Ascending aorta (tissue), 2 donors: ENCODE measurements at regions of chr1 and their contacts with region 1.

Region 1: DNA sequence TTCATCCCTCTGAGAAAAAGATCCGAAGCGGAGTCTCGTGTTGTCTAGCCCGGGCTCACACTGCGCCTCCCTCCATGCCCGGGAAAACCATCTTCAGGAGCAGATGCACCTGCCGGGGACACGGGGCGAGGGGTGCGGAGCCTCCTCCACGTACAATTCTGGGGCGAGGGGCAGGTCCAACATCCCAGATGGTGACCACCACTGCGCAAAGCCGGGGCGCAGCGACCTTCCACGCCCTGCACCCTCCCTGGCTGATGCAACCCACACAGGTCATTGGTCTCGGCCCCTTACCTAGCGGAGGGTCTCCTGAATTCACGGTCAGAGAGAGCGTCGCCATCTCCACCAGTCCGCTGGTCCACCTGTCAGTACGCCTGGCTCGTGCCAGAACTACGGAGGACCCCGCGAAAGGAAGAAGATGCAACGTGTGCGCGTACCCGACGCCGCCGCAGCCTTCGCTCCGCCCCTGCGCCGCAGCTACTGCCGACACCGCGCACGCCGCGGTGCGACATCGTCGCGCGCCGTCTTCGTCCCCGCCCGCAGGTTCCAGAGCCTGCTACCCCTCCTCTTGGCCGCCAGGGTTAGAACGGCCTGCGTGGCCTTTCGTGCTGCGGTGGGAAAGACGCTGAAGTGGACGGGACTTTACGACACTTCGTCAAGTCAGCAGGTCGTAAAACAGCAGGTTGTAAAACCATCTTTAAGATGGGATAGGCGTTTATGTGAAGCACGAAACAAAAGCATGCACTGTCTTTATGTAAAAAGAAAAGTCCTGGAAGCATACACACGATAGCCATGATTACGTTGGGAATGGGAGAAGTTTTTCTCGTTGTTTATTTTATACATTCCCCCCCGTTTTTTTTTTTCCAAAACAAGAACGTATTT is at the start of gene EPRS1:
- DNase-seq: peak; percentile 71 to 96
- H3K4me3 ChIP-seq: peak within 1 kb of the TSS; percentile 67 to 99
- H3K27ac ChIP-seq: peak within 1 kb of the TSS; percentile 84 to 89
- H3K4me1 ChIP-seq: peaks cover 0 to 10% of the 10 kb centered on the region in 2 donors
- H3K27me3 ChIP-seq: no peaks in the 10 kb centered on the region
- CTCF ChIP-seq: peak; percentile 70 to 85 (median 76)
- total RNA-seq, gene EPRS1: 16.0 TPM

Region 2: DNA sequence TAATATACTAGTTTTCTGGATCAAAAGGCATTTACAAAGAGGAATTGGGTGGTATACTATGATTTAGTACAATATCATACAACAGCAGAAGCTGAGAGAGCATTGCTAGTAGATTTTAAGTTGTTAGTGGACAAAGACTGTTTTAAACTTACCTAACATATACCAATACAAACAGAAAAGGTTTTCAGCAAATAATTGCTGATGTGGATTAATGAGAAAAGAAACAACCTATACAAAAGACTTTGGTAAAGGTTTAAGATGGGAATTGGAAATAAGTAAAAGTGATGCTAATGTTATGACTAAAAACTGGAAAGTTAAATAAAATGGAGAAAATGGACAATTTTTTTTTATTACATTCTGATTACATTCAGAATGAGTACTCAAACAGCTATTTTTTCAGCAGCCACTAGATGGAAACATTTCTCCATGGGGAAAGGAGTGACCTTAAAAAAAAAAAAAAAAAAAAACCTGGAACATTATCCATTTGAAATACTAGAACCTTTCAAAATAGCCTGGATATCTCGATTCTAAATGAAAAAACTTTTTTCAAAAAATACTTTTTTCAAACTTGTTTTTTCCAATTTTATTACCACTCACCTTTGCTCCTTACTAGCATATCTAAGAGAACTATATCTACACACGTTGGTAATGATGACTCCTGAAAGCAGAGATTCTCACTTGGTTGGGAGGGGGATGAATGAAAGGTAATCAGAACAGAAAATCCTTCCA is 55.3 kb before region 1 on chr1:
- intact Hi-C with region 1: loop called (anchors 1 kb)
- DNase-seq: no peak
- H3K4me3 ChIP-seq: no peak overlapping the region
- H3K27ac ChIP-seq: no peak overlapping the region
- H3K4me1 ChIP-seq: peaks cover 3 to 4% of the 10 kb centered on the region in 2 donors
- H3K27me3 ChIP-seq: no peaks in the 10 kb centered on the region
- CTCF ChIP-seq: peak in 2 of 3 experiments; percentile 51 to 72

Region 3: GRCh38 chr1:220013497-220013896 is 32.8 kb before region 1 on chr1:
- intact Hi-C with region 1: loop called (anchors 2 kb)
- DNase-seq: no peak
- H3K4me3 ChIP-seq: no peak overlapping the region
- H3K27ac ChIP-seq: peak overlapping the region; percentile 23 to 78
- H3K4me1 ChIP-seq: peaks cover 3 to 10% of the 10 kb centered on the region in 2 donors
- H3K27me3 ChIP-seq: no peaks in the 10 kb centered on the region
- CTCF ChIP-seq: no peak

Region 4: GRCh38 chr1:220089650-220090556 is 43.6 kb after region 1 on chr1 and contains the start of gene BPNT1:
- intact Hi-C with region 1: loop called (anchors 5 kb)
- DNase-seq: peak; percentile 74 to 97
- H3K4me3 ChIP-seq: peak within 1 kb of the TSS; percentile 56 to 71
- H3K27ac ChIP-seq: peak within 1 kb of the TSS in 1 of 2 donors; percentile 59
- H3K4me1 ChIP-seq: peaks cover 0 to 2% of the 10 kb centered on the region in 2 donors
- H3K27me3 ChIP-seq: no peaks in the 10 kb centered on the region
- CTCF ChIP-seq: no peak
- total RNA-seq, gene BPNT1: 5.4 TPM